ENCODE measurements at regions of chr16 and their contacts with region 1.

Region 1: DNA sequence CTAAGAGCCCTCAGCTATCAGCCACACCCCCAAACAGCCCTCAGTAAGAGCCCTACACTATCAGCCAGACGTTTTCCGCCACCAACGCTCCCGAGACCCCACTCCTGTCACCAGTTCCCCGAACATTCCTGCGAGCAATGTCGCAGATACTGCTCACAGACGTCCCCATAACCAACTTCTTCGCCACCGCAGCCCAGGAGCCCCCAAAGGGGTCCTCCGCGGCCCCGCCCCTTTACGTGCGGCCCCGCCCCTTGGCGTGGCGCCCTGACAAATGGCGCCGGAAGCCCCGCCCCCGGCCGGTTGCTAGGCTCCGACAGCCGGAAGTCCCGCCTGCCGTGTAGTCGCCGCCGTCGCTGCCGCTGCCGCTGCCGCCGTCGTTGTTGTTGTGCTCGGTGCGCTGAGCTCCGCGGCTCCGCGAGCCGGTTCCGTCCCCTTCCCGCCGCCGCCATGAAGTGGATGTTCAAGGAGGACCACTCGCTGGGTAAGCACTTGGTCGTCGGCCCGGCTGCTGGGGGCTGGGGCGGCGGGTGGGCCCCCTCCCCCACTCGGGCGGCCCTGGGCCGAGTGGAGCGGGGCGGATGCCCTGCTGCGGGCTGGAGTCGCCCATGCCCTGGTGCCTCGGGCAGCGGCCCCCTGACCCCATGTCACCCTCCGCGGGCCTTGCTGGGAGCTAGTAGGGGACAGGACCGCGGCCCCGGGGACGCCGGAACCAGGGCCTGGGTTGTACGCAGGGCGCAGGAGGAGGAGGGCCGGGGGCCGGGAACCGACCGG is at the start of gene GABARAPL2:
- DNase-seq: peak; percentile 92
- H3K4me3 Mint-ChIP-seq: peak within 1 kb of the TSS; percentile 94
- H3K27ac Mint-ChIP-seq: peak within 1 kb of the TSS; percentile 85
- H3K4me1 Mint-ChIP-seq: peaks cover 40% of the 10 kb centered on the region
- H3K27me3 Mint-ChIP-seq: peaks cover 7% of the 10 kb centered on the region
- total RNA-seq, gene GABARAPL2: 71.5 to 76.1 TPM

Region 2: GRCh38 chr16:75555707-75556430 is 10.4 kb before region 1 on chr16 and contains the start of gene TMEM231:
- CTCF ChIA-PET with region 1: interaction called, 13 read pairs
- POLR2A ChIA-PET with region 1: interaction called, 7 read pairs
- intact Hi-C with region 1: loop called (anchors 1 kb)
- DNase-seq: peak; percentile 98
- H3K4me3 Mint-ChIP-seq: peak within 1 kb of the TSS; percentile 88
- H3K27ac Mint-ChIP-seq: peak within 1 kb of the TSS; percentile 85
- H3K4me1 Mint-ChIP-seq: peaks cover 3% of the 10 kb centered on the region
- H3K27me3 Mint-ChIP-seq: peaks cover 4% of the 10 kb centered on the region
- total RNA-seq, gene TMEM231: 4.6 to 5.3 TPM